MCF 10A (cell line): ENCODE measurements at regions of chr1 and their contacts with region 1.

Region 1: DNA sequence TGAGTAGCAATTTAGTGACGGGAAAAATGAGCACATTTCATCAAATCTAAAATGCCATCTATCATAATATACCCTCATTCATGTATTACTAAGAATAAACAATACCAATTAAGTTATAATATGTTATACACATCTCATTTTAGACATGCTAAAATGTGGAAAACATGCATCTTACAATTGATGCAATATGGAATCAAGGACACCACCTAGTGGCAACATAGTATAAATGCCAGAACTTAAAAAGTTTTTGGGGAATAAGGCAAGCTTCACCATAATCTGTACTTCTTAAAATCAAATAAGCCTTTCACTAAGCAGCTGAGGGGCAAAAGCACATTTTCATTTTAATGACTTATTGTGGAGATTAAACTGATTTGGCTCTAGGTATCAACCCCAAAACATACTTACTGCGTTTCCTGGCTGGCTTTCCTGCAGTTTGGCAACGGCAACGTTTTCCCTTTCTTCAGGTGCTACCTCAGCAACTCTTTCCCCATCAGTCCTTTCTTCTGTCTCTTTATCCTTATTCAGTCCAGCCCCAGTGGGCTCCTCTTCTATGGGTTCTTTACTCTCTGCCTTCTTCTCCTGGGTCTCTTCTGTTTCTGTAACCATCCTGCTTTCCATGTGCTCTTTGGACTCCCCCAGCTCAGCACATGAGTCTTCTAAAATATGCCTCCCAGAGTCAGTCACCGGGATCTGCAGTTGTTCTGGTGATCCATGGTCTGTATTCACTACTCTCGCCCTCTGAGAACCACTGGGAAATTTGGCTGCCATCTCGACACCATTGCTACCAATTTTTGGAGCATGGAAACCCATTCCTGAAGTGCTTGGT is 11.4 kb downstream of the SDE2 start:
- DNase-seq: peak; percentile 77
- H3K4me3 Mint-ChIP-seq: no peak overlapping the region
- H3K27ac Mint-ChIP-seq: no peak overlapping the region
- H3K4me1 Mint-ChIP-seq: peaks cover 6% of the 10 kb centered on the region
- H3K27me3 Mint-ChIP-seq: no peaks in the 10 kb centered on the region
- CTCF ChIP-seq: peak; percentile 89

Region 2: DNA sequence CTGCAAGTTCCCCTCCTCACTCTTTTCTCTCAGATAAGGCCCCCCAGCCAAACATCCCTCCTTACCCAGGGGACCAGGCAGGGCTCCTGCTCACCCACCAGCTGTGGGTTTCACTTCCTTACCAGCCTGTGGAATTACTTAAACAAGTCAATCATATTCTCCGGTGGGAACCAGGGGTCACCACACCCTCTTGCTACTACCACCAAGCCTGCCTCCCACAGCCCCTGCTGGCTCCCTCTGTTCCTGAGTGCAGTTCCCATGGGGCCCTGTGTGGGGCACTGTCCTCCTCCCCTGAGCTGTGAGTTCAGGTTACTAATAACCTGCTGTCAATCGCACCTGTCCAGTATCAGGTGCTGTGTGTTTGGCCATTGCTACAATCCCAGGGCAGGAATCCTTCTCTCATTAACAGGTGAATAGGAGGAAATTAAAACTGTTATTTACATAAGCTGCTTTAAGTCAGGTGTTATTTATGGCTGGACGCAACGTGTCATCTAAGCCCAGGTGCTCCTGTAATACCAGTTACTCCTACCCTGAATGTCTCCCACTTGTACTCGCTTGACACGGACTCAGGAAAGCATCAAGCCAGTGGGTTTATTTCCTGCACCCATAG is 506.8 kb before region 1 on chr1:
- CTCF ChIA-PET with region 1: interaction called, 572 read pairs
- POLR2A ChIA-PET with region 1: no interaction called
- intact Hi-C with region 1: no loop called
- DNase-seq: peak; percentile 85
- H3K4me3 Mint-ChIP-seq: no peak overlapping the region
- H3K27ac Mint-ChIP-seq: no peak overlapping the region
- H3K4me1 Mint-ChIP-seq: peaks cover 7% of the 10 kb centered on the region
- H3K27me3 Mint-ChIP-seq: peaks cover 15% of the 10 kb centered on the region
- CTCF ChIP-seq: peak; percentile 100

Region 3: DNA sequence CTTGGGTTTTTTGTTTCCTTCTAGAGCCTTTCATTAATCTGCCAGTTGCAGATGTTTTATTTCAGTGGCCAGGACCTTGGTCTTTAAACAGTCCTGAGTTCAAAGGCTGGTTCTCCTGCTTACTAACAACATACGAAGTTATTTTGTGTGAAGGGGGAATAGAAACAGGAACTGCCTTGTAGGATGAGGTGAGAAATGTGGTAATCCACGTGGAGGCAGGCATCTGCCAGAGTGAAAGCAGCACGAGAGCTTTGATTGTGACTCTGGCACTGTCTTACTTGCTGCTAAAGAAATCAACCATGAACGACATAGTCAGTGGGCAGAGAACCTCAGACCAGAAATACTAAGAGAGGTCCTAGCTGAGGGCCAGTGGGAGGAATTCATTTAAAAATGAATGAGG is 135.9 kb before region 1 on chr1:
- CTCF ChIA-PET with region 1: interaction called, 11 read pairs
- POLR2A ChIA-PET with region 1: interaction called, 4 read pairs
- intact Hi-C with region 1: no loop called
- DNase-seq: no peak
- H3K4me3 Mint-ChIP-seq: no peak overlapping the region
- H3K27ac Mint-ChIP-seq: no peak overlapping the region
- H3K4me1 Mint-ChIP-seq: no peaks in the 10 kb centered on the region
- H3K27me3 Mint-ChIP-seq: no peaks in the 10 kb centered on the region
- CTCF ChIP-seq: no peak

Region 4: GRCh38 chr1:225888898-225889601 is 98.7 kb before region 1 on chr1 and contains the start of gene LEFTY1:
- CTCF ChIA-PET with region 1: interaction called, 12 read pairs
- POLR2A ChIA-PET with region 1: no interaction called
- intact Hi-C with region 1: no loop called
- DNase-seq: no peak
- H3K4me3 Mint-ChIP-seq: no peak within 1 kb of the TSS
- H3K27ac Mint-ChIP-seq: no peak within 1 kb of the TSS
- H3K4me1 Mint-ChIP-seq: peaks cover 7% of the 10 kb centered on the region
- H3K27me3 Mint-ChIP-seq: no peaks in the 10 kb centered on the region
- CTCF ChIP-seq: no peak
- total RNA-seq, gene LEFTY1: not detected in 2 replicates

Region 5: GRCh38 chr1:225999227-225999911 is 11.7 kb after region 1 on chr1 and contains the start of gene SDE2:
- CTCF ChIA-PET with region 1: interaction called, 67 read pairs
- POLR2A ChIA-PET with region 1: interaction called, 22 read pairs
- intact Hi-C with region 1: no loop called
- DNase-seq: peak; percentile 100
- H3K4me3 Mint-ChIP-seq: peak within 1 kb of the TSS; percentile 88
- H3K27ac Mint-ChIP-seq: peak within 1 kb of the TSS; percentile 99
- H3K4me1 Mint-ChIP-seq: peaks cover 33% of the 10 kb centered on the region
- H3K27me3 Mint-ChIP-seq: no peaks in the 10 kb centered on the region
- CTCF ChIP-seq: no peak
- total RNA-seq, gene SDE2: 59.3 and 61.8 TPM in 2 replicates

Region 6: GRCh38 chr1:226378071-226378470 is 390.4 kb after region 1 on chr1:
- CTCF ChIA-PET with region 1: no interaction called
- POLR2A ChIA-PET with region 1: no interaction called
- intact Hi-C with region 1: no loop called
- DNase-seq: no peak
- H3K4me3 Mint-ChIP-seq: no peak overlapping the region
- H3K27ac Mint-ChIP-seq: no peak overlapping the region
- H3K4me1 Mint-ChIP-seq: no peaks in the 10 kb centered on the region
- H3K27me3 Mint-ChIP-seq: no peaks in the 10 kb centered on the region
- CTCF ChIP-seq: no peak

Region 7: DNA sequence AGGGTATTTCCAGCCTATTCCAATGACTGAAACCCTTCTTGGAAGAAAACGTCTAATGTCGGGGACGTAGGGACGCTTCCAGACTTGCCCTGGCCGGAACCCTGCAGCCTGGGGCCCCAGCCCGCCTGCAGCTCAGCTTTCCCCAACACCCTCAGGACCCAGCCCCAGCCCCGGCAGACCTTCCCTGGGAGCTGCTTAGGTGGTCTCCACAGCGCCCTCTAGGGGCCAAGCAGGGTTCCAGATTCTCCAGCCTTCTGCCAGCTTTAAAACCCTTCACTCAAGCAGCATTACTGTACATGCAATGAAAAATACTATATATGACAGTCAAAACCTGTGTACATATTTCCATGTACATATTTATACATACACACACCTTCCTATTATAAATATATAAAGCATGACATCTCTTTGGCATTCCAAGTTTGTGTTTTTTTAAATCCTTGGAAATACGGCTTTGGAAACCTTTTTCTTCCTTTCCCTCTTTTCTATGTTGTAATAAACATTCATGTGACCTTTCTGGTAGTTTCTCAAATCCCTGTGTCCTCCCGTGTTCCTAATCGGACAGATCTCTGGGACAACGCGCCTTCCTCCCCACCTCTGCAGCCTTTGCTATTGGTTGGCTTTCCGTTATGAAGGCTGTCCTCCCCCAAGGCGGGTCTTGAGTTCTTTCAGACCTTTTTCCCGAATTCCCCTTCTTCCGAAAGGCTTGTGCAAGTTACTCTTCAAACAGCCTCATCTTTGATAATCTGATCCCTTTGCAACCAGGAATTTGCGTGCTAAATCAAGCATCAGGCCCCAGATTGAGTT is 621.2 kb after region 1 on chr1:
- CTCF ChIA-PET with region 1: no interaction called
- POLR2A ChIA-PET with region 1: no interaction called
- intact Hi-C with region 1: no loop called
- DNase-seq: peak; percentile 83
- H3K4me3 Mint-ChIP-seq: no peak overlapping the region
- H3K27ac Mint-ChIP-seq: no peak overlapping the region
- H3K4me1 Mint-ChIP-seq: peaks cover 6% of the 10 kb centered on the region
- H3K27me3 Mint-ChIP-seq: no peaks in the 10 kb centered on the region
- CTCF ChIP-seq: peak; percentile 99